ENCODE measurements at regions of chr5 and their contacts with region 1.

Region 1: DNA sequence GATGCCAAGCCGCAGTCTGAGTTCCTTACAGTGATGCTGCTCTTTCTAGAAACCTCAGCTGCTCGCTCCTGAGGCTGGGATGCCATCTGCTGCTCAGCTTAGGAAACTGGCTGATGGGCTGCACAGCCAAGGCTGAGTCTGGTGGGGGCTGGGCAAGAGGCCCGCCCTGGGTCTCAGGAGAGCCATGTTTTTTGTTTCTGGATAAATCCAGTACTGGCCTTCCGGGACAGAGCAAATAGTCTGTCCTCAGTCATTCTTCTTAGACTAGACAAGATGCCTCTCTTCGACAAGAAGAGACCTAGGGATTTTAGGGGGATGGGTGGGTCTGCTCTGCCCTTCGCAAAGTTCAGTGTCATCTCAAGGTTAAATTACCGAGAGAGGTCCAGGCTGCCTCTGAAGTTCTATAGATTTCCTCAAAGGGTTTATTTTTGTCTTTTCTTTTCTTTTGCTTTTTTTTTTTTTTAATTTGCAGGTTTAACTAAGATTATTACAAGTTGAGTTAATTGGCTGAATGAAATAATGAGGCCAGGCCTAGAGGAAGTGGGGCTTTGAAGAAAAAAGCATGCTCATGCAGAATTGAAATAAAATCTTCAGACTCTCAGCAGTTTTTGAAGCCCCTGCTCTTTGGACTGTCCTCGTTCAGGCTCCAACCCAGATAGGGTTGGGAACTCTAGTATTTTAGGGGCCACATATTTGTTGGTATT is 30.6 kb upstream of the MATR3 start:
- DNase-seq: peak; percentile 95

Region 2: DNA sequence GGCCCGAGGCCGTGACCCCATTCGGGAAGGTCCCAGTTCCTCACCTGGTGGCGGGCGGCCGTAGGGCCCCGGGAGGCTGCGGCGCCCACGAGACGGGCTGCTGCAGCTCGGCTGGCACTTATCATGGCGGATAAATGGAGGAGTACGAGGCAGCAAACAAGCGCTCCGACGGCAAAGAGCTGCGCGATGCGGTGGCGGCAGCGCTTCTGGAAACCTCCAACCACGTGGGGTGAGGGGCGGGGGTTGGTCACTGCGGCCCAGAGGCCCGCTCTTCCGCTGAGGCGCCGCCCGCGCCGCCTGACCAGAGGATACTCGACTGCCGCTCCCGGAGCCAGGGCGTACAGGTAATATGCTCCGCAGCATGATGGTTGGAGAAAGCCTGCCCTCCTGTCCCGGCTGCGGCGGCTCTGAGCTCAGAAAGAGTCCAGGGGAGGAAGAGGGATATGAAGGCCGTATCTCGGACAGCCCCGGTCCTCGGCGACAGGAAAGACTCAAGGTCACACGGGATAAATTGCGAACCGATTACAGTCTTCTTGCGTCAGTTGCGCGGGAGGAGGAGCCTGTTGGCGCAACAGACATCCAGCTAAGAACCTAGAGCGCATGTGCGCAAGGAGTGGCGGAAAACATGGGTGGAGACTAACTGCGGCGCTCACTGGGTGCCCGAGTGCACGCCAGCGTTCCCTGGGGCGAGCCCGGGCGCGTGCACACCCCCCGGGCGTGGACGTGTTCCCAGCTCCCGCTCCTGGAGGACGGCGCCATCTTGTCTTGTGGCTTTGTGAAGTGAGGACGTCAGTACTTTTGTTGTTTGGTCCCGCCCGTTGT is 687.5 kb before region 1 on chr5 and contains the start of gene HSPA9:
- intact Hi-C with region 1: loop called in 1 of 2 experiments (anchors 10 kb)
- DNase-seq: peak; percentile 99
- total RNA-seq, gene HSPA9: 141 to 160 TPM

Region 3: DNA sequence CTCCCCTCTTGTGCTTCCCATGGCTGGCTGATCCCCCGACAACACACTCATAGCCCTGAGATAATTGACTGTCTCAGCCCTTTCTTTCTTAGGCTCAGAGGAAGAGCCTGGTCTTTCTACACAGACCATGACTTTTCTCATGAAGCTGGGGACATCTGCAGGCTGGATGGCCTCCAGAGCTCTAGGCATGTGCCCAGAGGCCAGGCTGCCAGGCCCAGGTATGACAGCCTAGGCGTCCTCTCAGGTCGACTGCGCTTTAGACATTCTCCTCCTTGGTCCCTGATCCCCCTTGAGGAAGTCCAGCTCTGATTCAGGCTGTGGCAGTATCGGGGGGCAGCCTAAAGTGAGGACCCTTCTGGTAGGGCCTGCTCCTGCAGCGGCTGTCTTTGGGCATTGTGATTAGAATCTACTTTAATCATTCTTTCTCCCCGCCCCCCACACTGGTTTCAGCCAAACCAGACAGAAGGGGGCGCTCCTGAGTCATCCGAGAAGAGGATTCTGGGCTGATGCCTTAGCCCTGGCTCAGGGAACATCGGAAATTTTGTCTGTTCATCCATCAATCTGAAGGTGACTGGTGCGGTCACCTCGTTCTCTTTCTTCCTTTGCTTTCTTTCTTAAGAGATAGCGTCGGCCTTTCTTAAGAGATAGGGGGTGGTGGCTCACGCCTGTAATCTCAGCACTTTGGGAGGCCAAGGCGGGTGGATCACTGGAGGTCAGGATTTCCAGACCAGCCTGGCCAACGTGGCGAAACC is 621.2 kb before region 1 on chr5:
- intact Hi-C with region 1: loop called in 1 of 2 experiments (anchors 10 kb)
- DNase-seq: peak; percentile 87

Region 4: GRCh38 chr5:138824924-138825863 is 437.7 kb before region 1 on chr5:
- intact Hi-C with region 1: loop called in 1 of 2 experiments (anchors 10 kb)
- DNase-seq: no peak

Region 5: GRCh38 chr5:139091439-139092156 is 171.3 kb before region 1 on chr5:
- intact Hi-C with region 1: loop called in 1 of 2 experiments (anchors 5 kb)
- DNase-seq: no peak